ENCODE measurements at regions of chr1 and their contacts with region 1.

Region 1: GRCh38 chr1:43522776-43523480 is 7.8 kb upstream of the PTPRF start:
- DNase-seq: peak; percentile 83 to 97
- H3K4me3 ChIP-seq: no peak overlapping the region
- H3K27ac ChIP-seq: peak overlapping the region; percentile 50
- H3K4me1 ChIP-seq: peaks cover 25% of the 10 kb centered on the region
- H3K27me3 ChIP-seq: no peaks in the 10 kb centered on the region
- CTCF ChIP-seq: no peak

Region 2: DNA sequence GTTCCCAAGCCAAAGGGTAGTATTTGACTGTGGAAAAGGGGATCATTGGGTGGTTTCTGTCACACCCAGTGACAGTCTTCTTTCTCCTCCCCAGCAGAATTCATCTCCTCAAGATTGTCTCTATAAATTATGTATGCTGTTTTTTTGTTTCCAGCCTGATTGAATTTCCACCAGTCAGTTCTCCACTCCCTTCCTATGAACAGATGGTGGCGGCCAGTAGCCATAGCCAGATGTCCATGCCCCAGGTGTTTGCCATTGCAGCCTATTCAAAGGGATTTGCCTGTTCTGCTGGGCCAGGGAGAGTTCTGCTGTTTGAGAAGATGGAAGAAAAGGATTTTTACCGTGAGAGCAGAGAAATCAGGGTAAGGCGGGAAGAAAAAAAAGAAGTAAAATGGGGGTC is 337.9 kb before region 1 on chr1:
- CTCF ChIA-PET with region 1: no interaction called
- POLR2A ChIA-PET with region 1: no interaction called
- intact Hi-C with region 1: no loop called
- DNase-seq: no peak
- H3K4me3 ChIP-seq: no peak overlapping the region
- H3K27ac ChIP-seq: no peak overlapping the region
- H3K4me1 ChIP-seq: no peaks in the 10 kb centered on the region
- H3K27me3 ChIP-seq: no peaks in the 10 kb centered on the region
- CTCF ChIP-seq: no peak

Region 3: GRCh38 chr1:43227143-43227764 is 295.7 kb before region 1 on chr1:
- CTCF ChIA-PET with region 1: no interaction called
- POLR2A ChIA-PET with region 1: no interaction called
- intact Hi-C with region 1: loop called (anchors 2 kb)
- DNase-seq: peak; percentile 73 to 88
- H3K4me3 ChIP-seq: no peak overlapping the region
- H3K27ac ChIP-seq: no peak overlapping the region
- H3K4me1 ChIP-seq: peaks cover 16% of the 10 kb centered on the region
- H3K27me3 ChIP-seq: no peaks in the 10 kb centered on the region
- CTCF ChIP-seq: peak; percentile 97

Region 4: GRCh38 chr1:43373066-43373940 is 149.6 kb before region 1 on chr1:
- CTCF ChIA-PET with region 1: interaction called, 11 read pairs
- POLR2A ChIA-PET with region 1: interaction called, 27 read pairs
- intact Hi-C with region 1: no loop called
- DNase-seq: peak; percentile 68 to 88
- H3K4me3 ChIP-seq: no peak overlapping the region
- H3K27ac ChIP-seq: peak overlapping the region; percentile 85
- H3K4me1 ChIP-seq: peaks cover 52% of the 10 kb centered on the region
- H3K27me3 ChIP-seq: no peaks in the 10 kb centered on the region
- CTCF ChIP-seq: no peak

Region 5: GRCh38 chr1:43473463-43473862 is 49.5 kb before region 1 on chr1:
- CTCF ChIA-PET with region 1: no interaction called
- POLR2A ChIA-PET with region 1: no interaction called
- intact Hi-C with region 1: loop called (anchors 1 kb)
- DNase-seq: no peak
- H3K4me3 ChIP-seq: no peak overlapping the region
- H3K27ac ChIP-seq: peak overlapping the region; percentile 68
- H3K4me1 ChIP-seq: peaks cover 68% of the 10 kb centered on the region
- H3K27me3 ChIP-seq: no peaks in the 10 kb centered on the region
- CTCF ChIP-seq: no peak

Region 6: GRCh38 chr1:43509723-43510375 is 13.1 kb before region 1 on chr1:
- CTCF ChIA-PET with region 1: interaction called, 3 read pairs
- POLR2A ChIA-PET with region 1: no interaction called
- intact Hi-C with region 1: loop called (anchors 1 kb)
- DNase-seq: peak; percentile 76 to 91
- H3K4me3 ChIP-seq: peak overlapping the region; percentile 37; the same call in 1 of the 2 replicates
- H3K27ac ChIP-seq: peak overlapping the region; percentile 95
- H3K4me1 ChIP-seq: peaks cover 35% of the 10 kb centered on the region
- H3K27me3 ChIP-seq: no peaks in the 10 kb centered on the region
- CTCF ChIP-seq: no peak

Region 7: GRCh38 chr1:43540581-43541540 is 17.9 kb after region 1 on chr1:
- CTCF ChIA-PET with region 1: no interaction called
- POLR2A ChIA-PET with region 1: no interaction called
- intact Hi-C with region 1: no loop called
- DNase-seq: no peak
- H3K4me3 ChIP-seq: no peak overlapping the region
- H3K27ac ChIP-seq: no peak overlapping the region
- H3K4me1 ChIP-seq: peaks cover 34% of the 10 kb centered on the region
- H3K27me3 ChIP-seq: no peaks in the 10 kb centered on the region
- CTCF ChIP-seq: no peak

Region 8: DNA sequence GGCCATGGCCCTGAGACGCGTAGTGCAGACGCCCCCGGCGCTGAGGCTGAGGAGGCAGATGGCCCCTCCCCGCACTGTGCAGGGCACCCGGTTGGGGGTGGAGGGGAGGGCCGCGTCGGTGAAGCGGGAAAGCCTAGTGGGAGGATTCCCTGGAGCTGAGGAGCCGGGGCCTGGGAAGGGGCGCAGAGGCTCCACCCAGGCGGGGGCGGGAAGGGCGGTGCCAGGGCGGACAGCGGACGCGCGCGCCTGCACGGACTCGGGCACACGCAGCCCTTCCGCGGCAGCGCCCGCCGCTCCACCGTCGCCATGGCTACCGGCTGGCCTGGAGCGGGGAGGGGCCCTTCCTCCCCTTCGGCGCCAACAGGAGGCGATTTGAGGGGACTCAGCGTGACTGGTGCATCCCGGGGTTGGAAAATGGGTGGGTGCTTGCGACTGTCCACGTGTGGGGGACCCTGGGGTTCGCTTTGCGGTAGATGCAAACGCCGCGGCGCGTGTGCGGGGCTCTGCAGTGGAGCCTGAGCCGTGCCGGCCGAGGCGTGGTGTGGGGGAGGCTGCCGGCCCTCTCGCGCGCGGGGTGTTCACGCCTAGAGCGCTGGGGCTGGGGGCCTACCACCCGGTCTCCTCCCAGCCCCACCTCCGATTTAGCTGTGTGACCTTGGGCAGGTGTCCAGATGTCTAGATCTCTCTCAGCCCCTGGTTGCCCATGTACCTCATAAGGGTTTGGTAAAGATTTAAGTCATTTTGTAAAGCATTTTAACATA is 42.9 kb after region 1 on chr1:
- CTCF ChIA-PET with region 1: no interaction called
- POLR2A ChIA-PET with region 1: no interaction called
- intact Hi-C with region 1: no loop called
- DNase-seq: peak in 1 of 2 experiments; percentile 8
- H3K4me3 ChIP-seq: no peak overlapping the region
- H3K27ac ChIP-seq: no peak overlapping the region
- H3K4me1 ChIP-seq: no peaks in the 10 kb centered on the region
- H3K27me3 ChIP-seq: no peaks in the 10 kb centered on the region
- CTCF ChIP-seq: no peak

Region 9: DNA sequence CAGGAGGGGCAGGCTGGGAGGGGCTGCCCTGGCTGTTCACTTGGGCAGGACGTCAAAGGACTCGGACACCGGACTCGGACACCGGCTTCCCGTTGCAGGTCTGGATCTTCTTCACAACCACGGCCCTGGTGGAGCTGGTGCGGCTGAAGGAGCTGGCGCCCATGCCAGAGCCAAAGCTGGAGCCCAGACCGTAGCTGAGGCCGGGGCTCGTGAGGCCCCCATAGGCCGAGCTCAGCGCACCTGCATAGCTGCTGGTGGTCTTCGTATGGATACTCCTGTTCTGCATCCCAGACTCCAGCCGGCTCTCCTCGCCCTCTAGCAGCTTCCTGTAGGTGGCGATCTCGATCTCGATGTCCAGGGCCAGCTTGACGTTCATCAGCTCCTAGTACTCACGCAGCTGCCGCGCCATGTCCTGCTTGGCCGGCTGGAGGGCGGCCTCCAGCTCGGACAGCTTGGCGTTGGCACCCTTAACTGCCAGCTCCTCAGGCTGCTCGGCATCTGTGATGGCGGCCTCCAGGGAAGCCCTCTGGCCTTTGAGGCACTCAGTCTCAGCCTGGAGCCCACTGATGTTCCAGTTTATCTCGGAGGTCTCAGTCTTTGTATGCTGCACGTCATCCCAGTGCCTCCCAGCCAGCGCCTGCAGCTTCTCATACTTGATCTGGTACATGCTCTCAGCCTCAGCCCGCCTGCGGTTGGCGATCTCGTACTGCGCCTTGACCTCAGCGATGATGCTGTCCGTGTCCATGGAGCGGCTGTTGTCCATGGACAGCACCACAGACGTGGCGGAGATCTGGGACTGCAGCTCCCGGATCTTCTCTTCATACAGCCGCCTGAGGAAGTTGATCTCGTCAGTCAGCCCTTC is 580.6 kb after region 1 on chr1:
- CTCF ChIA-PET with region 1: no interaction called
- POLR2A ChIA-PET with region 1: no interaction called
- intact Hi-C with region 1: no loop called
- DNase-seq: no peak
- H3K4me3 ChIP-seq: no peak overlapping the region
- H3K27ac ChIP-seq: no peak overlapping the region
- H3K4me1 ChIP-seq: no peaks in the 10 kb centered on the region
- H3K27me3 ChIP-seq: no peaks in the 10 kb centered on the region
- CTCF ChIP-seq: no peak; the same call in 1 of the 2 replicates

Measured in PC-9 (cell line).